Left cardiac atrium (tissue), 4 donors: ENCODE measurements at regions of chr13 and their contacts with region 1.

Region 1: GRCh38 chr13:89749888-89750287 is 1597.6 kb upstream of the MIR17HG start:
- DNase-seq: no peak
- ATAC-seq: no peak

Region 2: DNA sequence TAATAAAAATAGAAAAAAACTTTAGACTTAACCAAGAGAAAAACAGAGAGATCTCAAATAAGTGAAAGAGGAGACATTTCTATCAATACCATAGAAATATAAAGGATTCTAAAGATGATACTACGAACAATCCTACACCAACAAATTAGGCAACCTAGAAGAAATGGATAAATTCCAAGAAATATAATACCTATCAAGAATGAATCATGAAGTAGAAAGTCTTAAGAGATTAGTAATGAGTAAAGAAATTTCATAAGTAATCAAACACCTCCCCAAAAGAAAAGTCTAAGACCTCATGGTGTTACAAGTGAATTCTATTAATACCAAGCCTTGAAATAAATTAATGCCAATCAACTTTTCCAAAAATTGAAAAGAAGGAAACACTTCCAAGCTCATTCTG is 13.1 kb after region 1 on chr13:
- intact Hi-C with region 1: loop called in 1 of 2 experiments (anchors 2 kb)
- DNase-seq: no peak
- ATAC-seq: no peak

Region 3: DNA sequence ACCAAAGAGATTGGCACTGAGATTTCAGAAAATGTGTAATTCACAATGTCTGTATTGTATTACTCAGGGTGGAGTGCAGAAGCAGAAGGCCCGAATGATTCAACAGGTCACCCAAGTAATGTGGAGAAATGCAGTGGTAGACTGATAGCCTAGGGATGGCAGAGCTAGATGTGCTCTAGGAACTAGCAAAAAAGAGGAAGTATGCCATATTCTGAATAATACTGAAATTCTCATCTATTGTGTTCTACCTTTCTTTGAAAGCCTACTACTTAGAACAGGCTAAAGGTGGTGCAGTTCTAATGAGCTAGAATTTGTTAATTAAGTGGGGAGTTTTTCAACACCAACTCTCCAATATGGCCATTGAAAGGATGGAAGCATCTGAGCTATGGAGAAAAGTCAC is 147.8 kb after region 1 on chr13:
- intact Hi-C with region 1: no loop called
- DNase-seq: no peak
- ATAC-seq: no peak